OCI-LY7 (cell line): ENCODE measurements at regions of chr7 and their contacts with region 1.

Region 1: GRCh38 chr7:14950013-14950412 is 47.5 kb upstream of the DGKB start:
- DNase-seq: no peak
- H3K4me3 ChIP-seq: no peak overlapping the region
- H3K27ac ChIP-seq: no peak overlapping the region
- H3K4me1 ChIP-seq: no peaks in the 10 kb centered on the region
- CTCF ChIP-seq: no peak

Region 2: DNA sequence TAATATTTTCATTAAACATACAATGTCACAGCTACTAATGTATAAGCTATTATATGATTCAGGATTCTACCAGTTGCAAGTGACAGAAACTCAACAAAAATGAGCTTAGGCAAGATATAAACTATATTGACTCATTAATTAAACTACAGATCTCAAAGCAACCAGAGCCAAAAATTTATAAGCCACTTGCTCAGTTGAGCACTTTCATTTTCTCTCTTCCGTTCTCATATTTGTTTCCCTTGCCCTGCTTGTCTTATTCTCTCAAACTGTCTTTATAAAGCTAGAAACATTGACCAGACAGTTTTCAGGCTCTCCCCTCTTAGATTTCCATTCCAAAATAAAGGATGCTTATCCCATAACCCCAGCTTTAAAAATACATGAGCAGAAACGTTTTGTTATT is 12.8 kb after region 1 on chr7:
- CTCF ChIA-PET with region 1: no interaction called
- POLR2A ChIA-PET with region 1: interaction called, 10 read pairs
- intact Hi-C with region 1: no loop called
- DNase-seq: no peak
- H3K4me3 ChIP-seq: no peak overlapping the region
- H3K27ac ChIP-seq: no peak overlapping the region
- H3K4me1 ChIP-seq: no peaks in the 10 kb centered on the region
- CTCF ChIP-seq: no peak